HepG2 (cell line): ENCODE measurements at regions of chr9 and their contacts with region 1.

Region 1: GRCh38 chr9:1604942-1605560 is 410.1 kb upstream of the SMARCA2 start:
- DNase-seq: peak; percentile 25
- ATAC-seq: peak; percentile 78
- H3K4me3 ChIP-seq: no peak overlapping the region
- H3K27ac ChIP-seq: no peak overlapping the region
- H3K4me1 ChIP-seq: no peaks in the 10 kb centered on the region
- H3K27me3 ChIP-seq: no peaks in the 10 kb centered on the region
- CTCF ChIP-seq: peak; percentile 64
- EP300 ChIP-seq: no peak
- POLR2A ChIP-seq: no peak
- RAD21 ChIP-seq: no peak

Region 2: DNA sequence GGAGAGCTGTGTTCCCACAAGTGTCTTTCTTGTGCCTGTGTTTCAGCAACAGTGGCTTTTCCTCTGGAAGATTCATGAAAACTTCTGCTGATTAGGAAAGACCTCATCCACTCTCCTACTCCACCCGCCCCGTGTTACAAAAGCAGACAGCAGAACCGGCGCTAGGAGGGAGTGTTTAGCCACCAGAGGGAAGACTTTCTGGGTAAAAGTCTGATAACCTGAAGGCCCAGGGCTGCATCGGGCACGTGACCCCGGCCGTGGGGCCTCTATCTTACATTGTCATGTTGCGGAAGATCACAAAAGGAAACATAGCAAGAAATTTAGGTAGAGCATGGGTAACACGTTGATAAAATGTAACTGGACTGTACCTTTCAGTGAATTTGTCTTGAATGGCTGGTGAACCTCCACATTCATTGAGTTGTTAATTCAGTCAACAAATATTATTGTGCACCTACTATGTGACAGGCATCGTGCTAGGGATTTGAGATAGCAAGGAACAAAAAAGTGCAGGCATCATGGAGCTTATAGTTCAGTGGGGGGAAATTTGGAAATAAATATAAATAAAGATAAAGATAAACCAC is 586.8 kb before region 1 on chr9:
- CTCF ChIA-PET with region 1: interaction called, 5 read pairs
- POLR2A ChIA-PET with region 1: no interaction called
- in situ Hi-C with region 1: no loop called
- intact Hi-C with region 1: loop called (anchors 2 kb)
- DNase-seq: peak; percentile 35
- ATAC-seq: peak; percentile 90
- H3K4me3 ChIP-seq: no peak overlapping the region
- H3K27ac ChIP-seq: no peak overlapping the region
- H3K4me1 ChIP-seq: no peaks in the 10 kb centered on the region
- H3K27me3 ChIP-seq: peaks cover 0 to 9% of the 10 kb centered on the region in 2 experiments; a peak in 2 of 5 replicates
- CTCF ChIP-seq: peak; percentile 57
- EP300 ChIP-seq: no peak
- POLR2A ChIP-seq: no peak
- RAD21 ChIP-seq: no peak

Region 3: DNA sequence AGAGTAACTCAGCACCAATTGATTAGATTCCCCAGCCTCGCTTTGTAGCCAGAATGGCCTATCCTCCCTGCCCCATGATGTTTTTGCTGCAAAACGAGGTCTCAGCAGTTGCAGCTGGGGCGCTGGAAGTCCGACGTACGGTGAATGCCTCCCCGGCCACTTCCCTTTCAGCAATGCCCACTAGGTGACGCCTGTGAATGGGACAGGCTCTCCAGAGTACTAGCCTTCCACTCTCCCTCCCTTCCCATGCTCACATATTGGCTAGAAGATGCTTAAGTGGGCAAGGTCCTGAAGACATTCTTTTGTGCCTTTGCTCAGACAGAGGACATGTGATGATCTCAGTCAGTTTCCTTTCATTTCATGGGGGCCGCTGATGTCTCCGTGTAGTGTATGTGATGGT is 504.1 kb before region 1 on chr9:
- CTCF ChIA-PET with region 1: interaction called, 3 read pairs
- POLR2A ChIA-PET with region 1: no interaction called
- in situ Hi-C with region 1: no loop called
- intact Hi-C with region 1: loop called (anchors 2 kb)
- DNase-seq: peak; percentile 26
- ATAC-seq: peak; percentile 98
- H3K4me3 ChIP-seq: no peak overlapping the region
- H3K27ac ChIP-seq: no peak overlapping the region
- H3K4me1 ChIP-seq: no peaks in the 10 kb centered on the region
- H3K27me3 ChIP-seq: no peaks in the 10 kb centered on the region; a peak in 1 of 5 replicates
- CTCF ChIP-seq: peak; percentile 85
- EP300 ChIP-seq: no peak
- POLR2A ChIP-seq: no peak
- RAD21 ChIP-seq: peak; percentile 65; the same call in 1 of the 2 replicates

Region 4: GRCh38 chr9:1460143-1460769 is 144.8 kb before region 1 on chr9:
- CTCF ChIA-PET with region 1: interaction called, 7 read pairs
- POLR2A ChIA-PET with region 1: no interaction called
- in situ Hi-C with region 1: loop called (anchors 10 kb)
- intact Hi-C with region 1: loop called (anchors 1 kb)
- DNase-seq: peak; percentile 53
- ATAC-seq: peak; percentile 97
- H3K4me3 ChIP-seq: no peak overlapping the region
- H3K27ac ChIP-seq: no peak overlapping the region
- H3K4me1 ChIP-seq: peaks cover 6% of the 10 kb centered on the region; the same call in 1 of the 2 replicates
- H3K27me3 ChIP-seq: no peaks in the 10 kb centered on the region
- CTCF ChIP-seq: peak; percentile 87
- EP300 ChIP-seq: no peak
- POLR2A ChIP-seq: no peak
- RAD21 ChIP-seq: peak; percentile 53; the same call in 1 of the 2 replicates